PC-9 (cell line): ENCODE measurements at regions of chr6 and their contacts with region 1.

Region 1: GRCh38 chr6:3788073-3789017 is 36.8 kb upstream of the PXDC1 start:
- DNase-seq: no peak
- H3K4me3 ChIP-seq: no peak overlapping the region
- H3K27ac ChIP-seq: no peak overlapping the region
- H3K4me1 ChIP-seq: peaks cover 31% of the 10 kb centered on the region
- H3K27me3 ChIP-seq: no peaks in the 10 kb centered on the region
- CTCF ChIP-seq: no peak

Region 2: GRCh38 chr6:3776881-3777507 is 11.4 kb before region 1 on chr6:
- CTCF ChIA-PET with region 1: interaction called, 11 read pairs
- POLR2A ChIA-PET with region 1: no interaction called
- intact Hi-C with region 1: no loop called
- DNase-seq: no peak
- H3K4me3 ChIP-seq: no peak overlapping the region
- H3K27ac ChIP-seq: no peak overlapping the region
- H3K4me1 ChIP-seq: no peaks in the 10 kb centered on the region
- H3K27me3 ChIP-seq: no peaks in the 10 kb centered on the region
- CTCF ChIP-seq: no peak

Region 3: DNA sequence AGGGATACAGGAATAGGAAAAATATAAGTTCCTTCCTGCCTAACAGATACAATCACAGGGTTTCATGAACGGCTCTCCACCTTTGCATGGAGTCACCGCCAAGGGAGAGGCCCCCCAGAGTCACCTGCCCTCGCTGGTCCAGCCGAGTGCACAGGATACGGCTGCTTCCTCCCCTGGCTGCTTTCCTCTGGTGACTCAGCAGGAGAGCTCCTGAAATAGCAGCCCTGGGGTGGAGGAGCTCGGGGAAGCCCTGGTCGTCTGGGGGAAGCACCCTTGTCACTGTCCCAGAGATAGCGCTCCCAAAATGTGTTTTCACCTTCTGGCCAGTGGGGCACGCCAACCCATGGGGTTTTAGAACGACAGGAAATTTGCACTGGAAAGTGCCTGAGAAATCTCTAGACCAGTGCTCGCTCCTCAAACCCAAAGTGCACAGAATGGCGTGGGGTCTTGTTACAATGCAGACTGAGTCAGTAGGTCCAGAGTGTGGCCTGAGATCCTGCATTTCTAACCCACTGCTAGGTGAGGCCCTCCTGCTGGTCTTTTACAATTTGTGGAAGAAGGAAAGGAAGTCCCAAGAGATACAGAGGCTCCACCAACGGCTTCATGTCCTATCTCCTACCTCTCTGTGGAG is 24.9 kb after region 1 on chr6:
- CTCF ChIA-PET with region 1: no interaction called
- POLR2A ChIA-PET with region 1: no interaction called
- intact Hi-C with region 1: no loop called
- DNase-seq: peak; percentile 40 to 54
- H3K4me3 ChIP-seq: no peak overlapping the region
- H3K27ac ChIP-seq: no peak overlapping the region; the same call in 1 of the 2 replicates
- H3K4me1 ChIP-seq: peaks cover 37% of the 10 kb centered on the region
- H3K27me3 ChIP-seq: no peaks in the 10 kb centered on the region
- CTCF ChIP-seq: no peak